Psoas muscle (tissue), 8 donors: ENCODE measurements at regions of chr10 and their contacts with region 1.

Region 1: GRCh38 chr10:125184551-125184950 is 24.2 kb upstream of the CTBP2 start:
- DNase-seq: no peak
- ATAC-seq: no peak
- H3K4me3 ChIP-seq: no peak overlapping the region
- H3K27ac ChIP-seq: no peak overlapping the region
- H3K4me1 ChIP-seq: no peaks in the 10 kb centered on the region
- H3K27me3 ChIP-seq: no peaks in the 10 kb centered on the region
- CTCF ChIP-seq: no peak

Region 2: DNA sequence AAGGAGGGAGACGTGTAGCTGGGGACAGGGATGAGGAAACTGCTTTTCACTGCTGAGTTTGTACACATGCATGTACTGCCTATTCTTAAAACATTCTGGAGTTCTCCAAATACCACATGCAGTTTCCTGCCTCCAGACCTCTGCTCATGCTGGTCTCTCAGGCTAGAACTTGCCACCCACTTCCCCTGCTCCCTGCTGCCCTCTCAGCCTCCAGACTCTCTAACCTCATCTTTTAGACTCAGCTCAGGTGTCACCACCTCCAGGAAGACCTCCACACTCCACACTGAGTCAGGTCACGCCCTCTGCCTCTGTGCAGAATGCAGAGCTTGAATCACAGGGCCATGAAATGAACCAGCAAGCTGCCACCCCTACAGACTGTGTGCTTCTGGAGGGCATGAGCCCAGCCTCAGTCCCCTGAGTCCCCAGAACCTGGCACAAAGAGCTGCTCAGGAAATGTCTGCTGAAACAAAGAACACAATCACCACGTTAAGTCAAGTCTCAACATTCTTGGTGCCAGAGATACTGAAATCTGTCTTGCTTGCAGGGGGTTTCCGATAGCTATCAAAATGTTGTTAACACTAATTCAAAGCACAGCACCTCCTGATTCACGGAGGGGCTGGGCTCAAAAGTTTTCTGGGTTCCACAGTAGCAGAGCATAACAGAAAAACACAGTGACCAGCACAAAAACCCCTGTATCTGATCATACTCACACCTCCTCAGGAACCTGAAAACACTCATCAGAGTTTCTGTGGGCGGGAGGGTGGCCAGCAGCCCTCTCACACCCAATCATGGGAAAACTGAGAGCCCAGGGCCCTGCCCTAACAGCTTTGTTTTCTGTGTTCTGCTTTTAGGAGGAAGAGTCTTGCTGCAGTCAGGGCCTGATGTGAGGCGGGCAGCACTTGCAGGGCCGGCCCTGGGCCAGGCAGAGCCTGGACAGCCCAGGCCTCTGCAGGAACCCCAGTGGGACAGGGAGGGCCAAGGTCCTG is 461.5 kb before region 1 on chr10:
- intact Hi-C with region 1: no loop called
- DNase-seq: no peak
- ATAC-seq: peak in 2 of 4 donors; percentile 8 to 12
- H3K4me3 ChIP-seq: peak overlapping the region; percentile 1
- H3K27ac ChIP-seq: peak overlapping the region; percentile 80
- H3K4me1 ChIP-seq: peaks cover 88% of the 10 kb centered on the region
- H3K27me3 ChIP-seq: no peaks in the 10 kb centered on the region
- CTCF ChIP-seq: no peak

Region 3: GRCh38 chr10:124971276-124971675 is 213.3 kb before region 1 on chr10:
- intact Hi-C with region 1: no loop called
- DNase-seq: no peak
- ATAC-seq: peak in 2 of 4 donors; percentile 16 to 26
- H3K4me3 ChIP-seq: no peak overlapping the region
- H3K27ac ChIP-seq: peak overlapping the region; percentile 39
- H3K4me1 ChIP-seq: peaks cover 36% of the 10 kb centered on the region
- H3K27me3 ChIP-seq: no peaks in the 10 kb centered on the region
- CTCF ChIP-seq: no peak

Region 4: GRCh38 chr10:125209591-125210355 is 25.2 kb after region 1 on chr10:
- intact Hi-C with region 1: loop called in 1 of 2 experiments (anchors 1 kb)
- DNase-seq: no peak
- ATAC-seq: no peak
- H3K4me3 ChIP-seq: no peak overlapping the region
- H3K27ac ChIP-seq: no peak overlapping the region
- H3K4me1 ChIP-seq: peaks cover 4% of the 10 kb centered on the region
- H3K27me3 ChIP-seq: peaks cover 0 to 7% (median 0%) of the 10 kb centered on the region in 3 donors
- CTCF ChIP-seq: no peak